AG04449 (cell line): ENCODE measurements at regions of chr9 and their contacts with region 1.

Region 1: GRCh38 chr9:120531683-120532300 is 48.2 kb downstream of the CDK5RAP2 start:
- DNase-seq: no peak
- H3K4me3 ChIP-seq: no peak overlapping the region
- CTCF ChIP-seq: peak; percentile 39

Region 2: DNA sequence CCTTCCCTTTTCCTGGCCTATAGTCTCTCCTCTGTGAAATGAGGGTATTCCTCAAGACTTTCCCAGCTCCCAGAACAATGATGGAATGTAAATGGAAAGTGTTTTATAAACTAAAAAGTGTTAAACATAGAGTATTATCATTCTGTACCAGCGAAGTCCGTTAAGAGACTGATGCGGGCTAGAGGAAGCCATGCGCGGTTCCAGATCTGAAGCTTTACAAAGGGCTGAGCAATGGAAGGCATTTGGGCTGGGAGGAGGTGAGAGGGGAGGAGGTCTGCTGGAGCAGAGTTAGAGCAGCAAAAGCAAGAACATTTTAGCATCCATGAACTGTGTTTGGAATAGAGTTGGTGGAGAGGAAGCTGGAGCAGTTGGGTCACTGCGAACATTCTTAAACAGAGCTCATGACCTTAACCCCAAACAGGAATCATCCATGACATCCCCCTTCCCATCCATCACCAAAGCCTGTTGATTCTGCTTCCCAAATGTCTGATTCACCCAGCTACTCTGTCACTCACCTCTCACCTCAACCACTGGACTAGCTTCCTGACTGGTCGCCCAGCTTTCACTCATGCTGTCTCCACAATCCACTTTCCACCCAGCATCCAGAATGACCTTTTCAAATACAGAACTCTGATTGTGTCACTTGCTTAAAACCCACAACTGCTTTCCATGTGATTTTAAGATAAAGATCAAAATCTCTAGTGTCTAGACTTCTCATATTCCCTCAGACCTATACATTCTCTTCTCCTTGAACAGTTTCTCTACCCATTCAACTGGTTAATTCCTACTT is 11.1 kb after region 1 on chr9:
- CTCF ChIA-PET with region 1: interaction called, 19 read pairs
- POLR2A ChIA-PET with region 1: no interaction called
- DNase-seq: no peak
- H3K4me3 ChIP-seq: no peak overlapping the region
- CTCF ChIP-seq: no peak